ENCODE measurements at regions of chr22 and their contacts with region 1.

Region 1: GRCh38 chr22:20016734-20017621 is at the start of gene ARVCF:
- DNase-seq: peak; percentile 91
- H3K4me3 Mint-ChIP-seq: peak within 1 kb of the TSS; percentile 84
- H3K27ac Mint-ChIP-seq: no peak within 1 kb of the TSS
- H3K4me1 Mint-ChIP-seq: peaks cover 15% of the 10 kb centered on the region
- H3K27me3 Mint-ChIP-seq: peaks cover 32% of the 10 kb centered on the region
- total RNA-seq, gene ARVCF: 2.4 and 3.1 TPM in 2 replicates

Region 2: DNA sequence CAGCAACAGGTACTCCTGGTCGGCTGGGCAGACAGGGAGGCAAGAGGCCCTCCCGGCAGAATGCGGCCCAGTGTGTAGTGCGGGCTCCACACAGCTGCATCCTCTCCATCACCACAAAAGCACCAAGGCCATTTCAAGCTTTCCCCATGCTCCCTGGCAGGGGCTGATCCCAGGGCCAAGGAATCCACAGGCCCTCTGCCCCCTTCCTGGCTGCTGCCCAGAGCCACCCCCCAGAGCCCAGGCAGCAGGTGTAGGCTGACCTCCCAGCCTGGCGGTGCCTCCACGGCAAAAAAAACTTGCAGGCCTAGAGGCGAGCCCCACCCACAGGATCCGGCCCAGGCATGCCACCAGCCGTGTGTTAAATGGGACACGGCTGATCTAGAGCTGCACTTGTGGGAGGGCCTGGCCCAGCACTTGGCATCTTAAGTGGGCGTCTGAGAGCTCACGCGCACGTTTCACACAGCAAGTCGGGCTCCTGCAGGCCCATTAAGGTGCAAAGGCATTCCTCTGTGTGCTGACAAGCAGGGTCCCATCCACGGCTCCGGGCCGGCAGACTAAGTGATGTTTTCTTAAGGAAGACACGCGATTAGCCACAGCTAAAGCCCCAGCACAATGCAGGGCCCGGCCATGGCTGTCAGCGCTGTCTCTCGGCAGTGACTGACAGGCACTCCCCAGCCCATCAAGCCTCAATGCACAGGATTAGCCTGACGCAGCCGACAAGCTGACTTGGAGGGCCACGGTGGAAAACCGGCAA is 142.5 kb before region 1 on chr22:
- intact Hi-C with region 1: no loop called
- DNase-seq: no peak
- H3K4me3 Mint-ChIP-seq: no peak overlapping the region
- H3K27ac Mint-ChIP-seq: no peak overlapping the region
- H3K4me1 Mint-ChIP-seq: no peaks in the 10 kb centered on the region
- H3K27me3 Mint-ChIP-seq: no peaks in the 10 kb centered on the region

Region 3: GRCh38 chr22:19970479-19971275 is 46.3 kb before region 1 on chr22:
- intact Hi-C with region 1: loop called (anchors 1 kb)
- DNase-seq: peak; percentile 69
- H3K4me3 Mint-ChIP-seq: no peak overlapping the region
- H3K27ac Mint-ChIP-seq: no peak overlapping the region
- H3K4me1 Mint-ChIP-seq: peaks cover 9% of the 10 kb centered on the region
- H3K27me3 Mint-ChIP-seq: no peaks in the 10 kb centered on the region

Region 4: DNA sequence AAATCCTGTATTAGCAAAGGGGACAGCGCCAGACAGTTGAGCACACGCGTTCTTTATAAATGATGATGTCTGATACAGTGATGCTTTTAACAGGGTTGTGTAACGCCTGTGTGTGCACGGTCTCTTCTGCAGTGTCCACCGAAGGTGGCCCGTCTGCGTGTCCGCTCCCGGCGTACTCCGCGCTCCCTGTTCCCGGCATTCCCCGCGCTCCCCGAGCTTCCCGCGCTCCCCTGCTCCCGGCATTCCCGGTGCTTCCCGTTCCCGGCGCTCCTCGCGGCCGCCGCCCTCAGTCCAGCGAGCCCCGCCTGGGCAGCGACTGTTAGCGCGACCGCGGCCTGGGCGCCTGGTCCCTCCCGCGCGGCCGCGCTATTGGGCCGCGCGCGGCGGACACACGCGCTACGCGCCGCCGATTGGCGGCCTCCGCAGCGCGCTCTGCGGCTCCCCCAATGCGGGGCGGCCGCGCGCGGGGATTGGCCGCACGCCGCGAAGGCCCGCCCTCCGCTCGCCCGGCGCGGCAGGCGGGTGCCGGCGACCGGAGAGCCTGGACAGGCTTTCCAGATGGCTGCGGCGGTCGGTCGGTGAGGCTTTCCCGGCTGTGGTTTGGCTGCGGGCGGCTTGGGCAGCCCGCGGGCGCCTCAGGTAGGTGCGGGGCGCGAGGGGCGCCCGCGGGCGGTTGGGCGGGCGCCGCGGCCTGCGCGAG is 62.9 kb after region 1 on chr22 and contains the start of gene DGCR8:
- intact Hi-C with region 1: loop called (anchors 1 kb)
- DNase-seq: peak; percentile 74
- H3K4me3 Mint-ChIP-seq: peak within 1 kb of the TSS; percentile 86
- H3K27ac Mint-ChIP-seq: peak within 1 kb of the TSS; percentile 82
- H3K4me1 Mint-ChIP-seq: peaks cover 40% of the 10 kb centered on the region
- H3K27me3 Mint-ChIP-seq: no peaks in the 10 kb centered on the region
- total RNA-seq, gene DGCR8: 79.3 and 81.0 TPM in 2 replicates

Region 5: DNA sequence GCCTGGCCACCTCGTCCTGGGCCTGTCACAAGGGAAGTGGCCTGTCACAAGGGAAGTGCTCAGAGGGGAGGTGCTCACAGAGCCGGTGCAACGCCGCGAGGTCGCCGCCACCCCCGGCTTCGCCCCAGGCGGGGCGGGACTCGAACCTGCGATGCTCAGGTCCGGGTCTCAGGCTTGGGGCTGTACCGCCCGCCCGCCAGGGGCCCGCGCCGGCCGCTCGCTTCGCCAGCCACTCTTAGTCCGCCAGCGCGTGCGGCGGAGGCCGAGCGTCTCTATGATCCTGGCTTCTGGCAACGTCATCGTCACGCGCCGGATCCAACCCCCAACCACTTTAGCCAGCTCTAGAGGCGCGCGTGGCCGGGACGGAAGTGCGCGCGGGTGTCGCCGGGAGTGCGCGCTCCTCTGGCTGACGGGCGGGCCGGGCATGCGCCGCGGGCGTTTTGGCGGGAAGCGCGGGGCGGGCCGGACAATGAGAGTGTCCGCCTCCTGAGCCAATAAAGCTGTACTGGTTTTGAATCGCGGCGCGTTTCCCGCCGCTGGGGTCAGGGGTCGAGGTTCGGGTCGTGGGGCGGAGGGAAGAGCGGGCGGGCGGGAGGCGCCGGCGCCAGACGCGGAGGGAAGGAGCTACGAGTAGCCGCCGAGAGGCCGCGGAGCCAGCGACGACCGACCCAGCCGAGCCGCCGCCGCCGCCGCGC is 100.1 kb after region 1 on chr22 and contains the start of gene TRMT2A:
- intact Hi-C with region 1: loop called (anchors 1 kb)
- DNase-seq: peak; percentile 97
- H3K4me3 Mint-ChIP-seq: peak within 1 kb of the TSS; percentile 97
- H3K27ac Mint-ChIP-seq: peak within 1 kb of the TSS; percentile 96
- H3K4me1 Mint-ChIP-seq: peaks cover 30% of the 10 kb centered on the region
- H3K27me3 Mint-ChIP-seq: peaks cover 3% of the 10 kb centered on the region
- total RNA-seq, gene TRMT2A: 142 and 161 TPM in 2 replicates

Region 6: DNA sequence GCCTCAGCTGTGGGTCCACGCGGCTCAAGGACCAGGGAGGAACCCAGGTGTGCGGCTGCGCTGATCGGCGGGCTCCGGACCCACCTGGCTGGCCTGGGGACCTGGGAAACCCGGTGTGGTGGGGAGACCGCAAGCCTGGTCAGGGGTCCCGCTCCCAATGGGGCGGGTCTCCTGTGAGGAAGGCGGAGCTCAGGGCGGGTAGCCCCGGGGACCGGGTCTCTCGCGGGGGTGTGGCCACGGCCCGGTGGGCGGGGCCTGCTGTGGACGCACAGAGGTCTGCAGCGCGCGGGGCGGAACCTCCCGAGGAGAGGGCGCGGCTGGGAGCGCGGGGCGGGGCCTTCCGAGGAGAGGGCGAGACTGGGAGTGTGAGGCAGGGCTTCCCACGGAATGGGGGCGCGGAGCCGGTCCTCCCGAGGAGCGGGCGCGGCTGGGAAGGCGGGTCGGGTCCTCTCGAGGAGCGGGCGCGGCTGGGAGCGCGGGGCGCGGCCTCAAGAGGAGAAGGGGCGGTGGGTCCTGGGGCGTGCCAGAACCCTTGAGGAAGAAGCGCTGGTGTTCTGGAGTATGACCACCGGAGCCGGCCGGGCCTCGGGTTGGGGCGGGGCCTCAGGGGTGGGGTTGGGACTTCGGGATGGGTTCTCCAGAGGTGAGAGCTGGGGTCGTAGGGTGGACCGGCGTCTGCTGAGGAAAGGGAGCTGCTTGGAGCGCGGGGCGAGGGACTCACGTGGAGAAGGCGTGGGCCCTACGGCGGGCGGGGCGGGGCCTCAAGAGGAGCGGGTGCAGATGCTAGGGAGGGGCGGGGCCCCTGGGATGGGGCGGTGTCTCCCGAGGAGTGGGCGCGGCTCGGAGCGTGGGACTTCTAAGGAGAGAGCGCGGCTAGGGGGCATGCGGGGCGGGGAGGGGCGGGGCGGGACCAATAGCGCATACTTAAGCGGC is 282.1 kb after region 1 on chr22:
- intact Hi-C with region 1: loop called (anchors 1 kb)
- DNase-seq: peak; percentile 85
- H3K4me3 Mint-ChIP-seq: peak overlapping the region; percentile 80
- H3K27ac Mint-ChIP-seq: peak overlapping the region; percentile 48
- H3K4me1 Mint-ChIP-seq: no peaks in the 10 kb centered on the region
- H3K27me3 Mint-ChIP-seq: peaks cover 6% of the 10 kb centered on the region

Region 7: GRCh38 chr22:20606041-20606783 is 589.2 kb after region 1 on chr22:
- intact Hi-C with region 1: no loop called
- DNase-seq: peak; percentile 42
- H3K4me3 Mint-ChIP-seq: no peak overlapping the region
- H3K27ac Mint-ChIP-seq: no peak overlapping the region
- H3K4me1 Mint-ChIP-seq: no peaks in the 10 kb centered on the region
- H3K27me3 Mint-ChIP-seq: peaks cover 4% of the 10 kb centered on the region

Measured in activated T-helper 1 cell treated with anti-CD3 and anti-CD28 coated beads, Interleukin-12 subunit alpha, Interleukin-12 subunit beta, Interleukin-2, Interleukin-4 antibody, amounts not matched to agents 30 ng/mL and 10 ng/mL and 1 ng/mL, durations not matched to agents 14 hours and 24 hours and 36 hours (primary cell).